ENCODE measurements at regions of chr9 and their contacts with region 1.

Region 1: DNA sequence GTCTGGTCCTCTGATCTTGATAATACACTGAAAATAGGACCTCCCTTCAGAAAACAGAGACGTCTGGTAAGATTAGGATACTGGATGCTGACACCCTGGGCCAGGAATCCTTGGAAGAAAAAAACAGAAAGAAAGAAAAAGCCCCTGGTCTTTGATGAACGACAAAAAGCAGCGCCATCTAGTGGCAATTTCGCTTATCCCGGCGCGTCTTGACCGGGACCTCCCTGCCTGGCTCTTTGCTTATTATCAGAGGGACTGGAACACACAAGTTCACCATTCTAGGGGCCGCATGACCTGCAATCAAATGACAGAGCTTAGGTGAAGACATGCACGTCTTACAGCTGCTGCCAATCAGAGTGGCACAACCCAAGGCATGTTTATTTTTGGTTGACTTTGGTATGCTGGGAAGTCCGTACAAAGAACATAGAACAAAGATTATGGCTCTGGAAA is 114.9 kb upstream of the NFIB start:
- DNase-seq: peak; percentile 69
- ATAC-seq: peak; percentile 62
- H3K4me3 ChIP-seq: no peak overlapping the region
- H3K27ac ChIP-seq: no peak overlapping the region
- H3K4me1 ChIP-seq: no peaks in the 10 kb centered on the region; the same call in 1 of the 2 replicates
- H3K27me3 ChIP-seq: peaks cover 25% of the 10 kb centered on the region
- CTCF ChIP-seq: peak; percentile 73
- POLR2A ChIP-seq: no peak
- RAD21 ChIP-seq: peak; percentile 63

Region 2: DNA sequence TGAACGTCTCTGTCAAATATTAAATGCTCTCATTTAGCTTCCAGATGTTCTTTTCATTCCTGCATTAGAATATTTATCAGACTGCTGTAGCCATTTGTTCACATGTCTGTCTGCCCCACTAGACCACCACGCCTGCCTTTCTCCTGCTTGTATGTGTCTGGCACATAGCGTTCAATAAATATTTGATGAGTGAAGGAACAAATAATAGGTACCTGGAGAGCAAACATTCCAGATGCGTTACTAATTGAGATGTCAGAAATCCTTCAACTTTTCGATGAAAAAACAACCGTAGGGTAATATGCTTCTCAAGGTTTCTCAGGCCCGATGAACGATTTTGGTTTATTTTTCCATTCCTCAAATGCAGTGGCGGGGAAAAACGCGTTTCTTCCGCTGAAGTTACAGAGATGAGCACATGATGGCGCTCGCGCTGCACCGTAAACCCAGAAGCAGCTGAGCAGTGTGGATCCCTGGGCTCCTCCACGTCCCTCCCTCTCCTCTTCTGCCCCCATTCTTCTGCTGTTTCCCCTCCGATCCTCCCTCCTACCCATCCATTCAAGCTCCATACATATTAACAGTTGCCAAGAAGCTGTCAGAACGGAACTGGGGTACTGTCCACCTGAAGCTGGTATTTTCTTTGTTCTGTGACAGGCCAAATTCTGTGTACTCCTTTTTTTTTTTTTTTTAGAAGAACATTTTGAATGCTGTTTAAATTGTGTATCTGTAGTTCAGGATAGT is 1394.7 kb before region 1 on chr9:
- CTCF ChIA-PET with region 1: no interaction called
- POLR2A ChIA-PET with region 1: no interaction called
- dilution Hi-C with region 1: no loop called
- in situ Hi-C with region 1: loop called (anchors 25 kb)
- intact Hi-C with region 1: loop called (anchors 1 kb)
- DNase-seq: peak; percentile 54
- ATAC-seq: peak; percentile 99
- H3K4me3 ChIP-seq: no peak overlapping the region
- H3K27ac ChIP-seq: no peak overlapping the region
- H3K4me1 ChIP-seq: no peaks in the 10 kb centered on the region
- H3K27me3 ChIP-seq: peaks cover 3% of the 10 kb centered on the region; the same call in 1 of the 2 replicates
- CTCF ChIP-seq: peak; percentile 87
- POLR2A ChIP-seq: no peak
- RAD21 ChIP-seq: peak; percentile 91

Region 3: DNA sequence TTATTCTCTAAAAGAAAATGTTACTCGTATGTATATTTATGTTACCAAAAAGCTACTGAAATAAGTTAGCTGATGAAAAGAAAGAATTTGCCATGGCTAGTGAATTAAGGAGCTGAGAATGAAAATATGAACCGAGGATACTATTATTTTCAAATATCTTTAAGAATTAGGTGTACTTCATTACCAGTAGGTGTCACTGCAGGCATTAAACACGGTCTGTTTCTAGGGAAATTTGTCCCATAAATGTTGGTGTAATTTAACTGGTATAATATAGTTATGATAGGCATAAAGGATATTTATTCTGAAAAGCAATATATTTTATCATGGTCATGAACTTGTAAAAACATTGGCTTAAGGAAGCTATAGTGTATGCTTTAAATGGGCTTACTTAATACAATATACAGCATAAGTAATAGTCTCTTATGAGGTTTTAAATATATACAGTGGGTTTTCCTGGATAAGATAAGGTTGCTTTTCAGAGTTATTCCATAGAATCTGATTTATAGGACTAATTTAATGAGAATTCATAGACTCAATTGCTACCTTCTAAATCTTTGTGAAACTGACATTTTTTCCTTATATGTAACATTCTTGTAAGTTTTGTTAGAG is 1076.9 kb before region 1 on chr9:
- CTCF ChIA-PET with region 1: no interaction called
- POLR2A ChIA-PET with region 1: no interaction called
- dilution Hi-C with region 1: no loop called
- in situ Hi-C with region 1: loop called (anchors 10 kb)
- intact Hi-C with region 1: loop called (anchors 5 kb)
- DNase-seq: peak; percentile 65
- ATAC-seq: peak; percentile 75
- H3K4me3 ChIP-seq: no peak overlapping the region
- H3K27ac ChIP-seq: no peak overlapping the region
- H3K4me1 ChIP-seq: peaks cover 2% of the 10 kb centered on the region; the same call in 1 of the 2 replicates
- H3K27me3 ChIP-seq: no peaks in the 10 kb centered on the region
- CTCF ChIP-seq: peak; percentile 73
- POLR2A ChIP-seq: no peak
- RAD21 ChIP-seq: peak; percentile 65

Region 4: DNA sequence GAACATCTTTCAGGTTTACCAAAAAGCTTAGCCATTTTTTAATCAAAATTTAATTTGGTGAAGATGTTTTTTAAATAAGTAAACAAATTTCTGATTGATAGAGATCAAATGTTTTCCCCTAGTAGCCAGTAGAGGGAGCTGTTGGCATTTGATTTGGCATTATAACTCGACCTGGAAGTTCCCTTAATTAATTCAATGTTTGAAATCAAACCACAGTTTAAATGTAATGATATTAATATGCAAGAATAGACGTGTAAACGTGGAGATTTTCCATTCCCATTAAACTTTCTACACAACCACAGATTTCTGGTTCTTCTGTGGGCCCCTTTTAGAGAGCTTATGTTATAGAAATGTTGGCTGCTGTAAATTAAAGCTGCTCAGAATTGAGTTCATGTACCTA is 1001.2 kb before region 1 on chr9:
- CTCF ChIA-PET with region 1: interaction called, 3 read pairs
- POLR2A ChIA-PET with region 1: no interaction called
- dilution Hi-C with region 1: loop called (anchors 25 kb)
- in situ Hi-C with region 1: no loop called
- intact Hi-C with region 1: loop called (anchors 1 kb)
- DNase-seq: peak; percentile 50
- ATAC-seq: peak; percentile 42; the same call in 1 of the 2 replicates
- H3K4me3 ChIP-seq: no peak overlapping the region
- H3K27ac ChIP-seq: no peak overlapping the region
- H3K4me1 ChIP-seq: no peaks in the 10 kb centered on the region
- H3K27me3 ChIP-seq: peaks cover 15% of the 10 kb centered on the region
- CTCF ChIP-seq: peak; percentile 71
- POLR2A ChIP-seq: no peak
- RAD21 ChIP-seq: peak; percentile 77

Region 5: GRCh38 chr9:14096258-14096922 is 332.4 kb before region 1 on chr9:
- CTCF ChIA-PET with region 1: no interaction called
- POLR2A ChIA-PET with region 1: no interaction called
- dilution Hi-C with region 1: no loop called
- in situ Hi-C with region 1: no loop called
- intact Hi-C with region 1: loop called (anchors 10 kb)
- DNase-seq: peak; percentile 62
- ATAC-seq: peak; percentile 21; the same call in 1 of the 2 replicates
- H3K4me3 ChIP-seq: no peak overlapping the region
- H3K27ac ChIP-seq: no peak overlapping the region
- H3K4me1 ChIP-seq: no peaks in the 10 kb centered on the region
- H3K27me3 ChIP-seq: peaks cover 5% of the 10 kb centered on the region
- CTCF ChIP-seq: no peak
- POLR2A ChIP-seq: no peak
- RAD21 ChIP-seq: no peak

Region 6: DNA sequence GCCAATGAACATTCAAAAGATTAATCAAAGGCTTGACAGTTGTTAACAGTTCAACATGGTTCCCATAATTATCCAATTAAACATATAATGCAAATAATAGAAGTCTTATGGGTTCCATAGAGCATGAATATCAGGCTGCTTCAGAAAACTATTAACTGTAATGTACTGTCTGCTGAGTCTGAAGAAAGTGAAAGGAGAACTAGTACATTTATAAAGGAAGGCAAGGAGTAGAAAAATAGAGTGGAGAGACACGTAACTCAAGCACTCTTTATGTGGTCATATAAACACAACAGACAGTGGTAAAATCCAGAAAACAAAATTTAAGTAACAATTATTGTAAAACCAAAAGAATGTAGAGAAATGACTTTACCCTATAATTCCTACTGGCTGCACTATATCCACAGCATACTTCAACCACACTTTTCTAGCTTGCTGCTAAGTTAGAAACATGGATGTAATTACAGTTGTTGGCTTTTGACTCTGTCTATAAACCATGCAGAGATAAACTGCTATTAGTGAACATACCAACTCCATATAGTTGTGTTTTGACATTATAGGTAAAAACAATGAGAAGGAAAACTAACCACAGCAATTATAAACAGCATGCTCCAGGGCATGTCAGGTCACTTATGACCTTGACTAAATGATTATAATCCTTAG is 147.5 kb before region 1 on chr9:
- CTCF ChIA-PET with region 1: no interaction called
- POLR2A ChIA-PET with region 1: no interaction called
- dilution Hi-C with region 1: no loop called
- in situ Hi-C with region 1: no loop called
- intact Hi-C with region 1: no loop called
- DNase-seq: no peak
- ATAC-seq: peak; percentile 18; the same call in 1 of the 2 replicates
- H3K4me3 ChIP-seq: no peak overlapping the region
- H3K27ac ChIP-seq: no peak overlapping the region
- H3K4me1 ChIP-seq: peaks cover 5% of the 10 kb centered on the region
- H3K27me3 ChIP-seq: peaks cover 3% of the 10 kb centered on the region
- CTCF ChIP-seq: no peak
- POLR2A ChIP-seq: no peak
- RAD21 ChIP-seq: no peak

Region 7: DNA sequence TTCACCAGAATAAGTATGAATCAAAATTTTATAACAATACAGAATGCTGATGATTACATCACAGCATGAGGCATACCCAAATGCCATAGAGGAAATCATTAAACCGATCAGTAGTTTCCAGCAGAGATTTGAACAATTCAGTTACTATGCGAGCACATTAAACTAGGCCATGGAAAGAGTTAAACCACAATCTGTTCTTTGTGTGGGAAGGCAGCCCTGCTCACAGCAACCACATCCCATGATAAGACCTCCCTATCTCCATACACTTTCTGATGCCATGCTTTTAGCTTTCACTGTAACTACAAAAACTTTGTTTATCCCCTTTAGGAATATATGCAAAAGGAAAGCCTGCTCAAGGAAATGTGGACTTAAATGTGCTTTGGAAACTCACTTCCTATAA is 119.4 kb before region 1 on chr9:
- CTCF ChIA-PET with region 1: no interaction called
- POLR2A ChIA-PET with region 1: no interaction called
- dilution Hi-C with region 1: no loop called
- in situ Hi-C with region 1: no loop called
- intact Hi-C with region 1: no loop called
- DNase-seq: peak; percentile 24
- ATAC-seq: no peak
- H3K4me3 ChIP-seq: no peak overlapping the region
- H3K27ac ChIP-seq: no peak overlapping the region
- H3K4me1 ChIP-seq: no peaks in the 10 kb centered on the region
- H3K27me3 ChIP-seq: peaks cover 46% of the 10 kb centered on the region
- CTCF ChIP-seq: no peak
- POLR2A ChIP-seq: no peak
- RAD21 ChIP-seq: no peak

Region 8: DNA sequence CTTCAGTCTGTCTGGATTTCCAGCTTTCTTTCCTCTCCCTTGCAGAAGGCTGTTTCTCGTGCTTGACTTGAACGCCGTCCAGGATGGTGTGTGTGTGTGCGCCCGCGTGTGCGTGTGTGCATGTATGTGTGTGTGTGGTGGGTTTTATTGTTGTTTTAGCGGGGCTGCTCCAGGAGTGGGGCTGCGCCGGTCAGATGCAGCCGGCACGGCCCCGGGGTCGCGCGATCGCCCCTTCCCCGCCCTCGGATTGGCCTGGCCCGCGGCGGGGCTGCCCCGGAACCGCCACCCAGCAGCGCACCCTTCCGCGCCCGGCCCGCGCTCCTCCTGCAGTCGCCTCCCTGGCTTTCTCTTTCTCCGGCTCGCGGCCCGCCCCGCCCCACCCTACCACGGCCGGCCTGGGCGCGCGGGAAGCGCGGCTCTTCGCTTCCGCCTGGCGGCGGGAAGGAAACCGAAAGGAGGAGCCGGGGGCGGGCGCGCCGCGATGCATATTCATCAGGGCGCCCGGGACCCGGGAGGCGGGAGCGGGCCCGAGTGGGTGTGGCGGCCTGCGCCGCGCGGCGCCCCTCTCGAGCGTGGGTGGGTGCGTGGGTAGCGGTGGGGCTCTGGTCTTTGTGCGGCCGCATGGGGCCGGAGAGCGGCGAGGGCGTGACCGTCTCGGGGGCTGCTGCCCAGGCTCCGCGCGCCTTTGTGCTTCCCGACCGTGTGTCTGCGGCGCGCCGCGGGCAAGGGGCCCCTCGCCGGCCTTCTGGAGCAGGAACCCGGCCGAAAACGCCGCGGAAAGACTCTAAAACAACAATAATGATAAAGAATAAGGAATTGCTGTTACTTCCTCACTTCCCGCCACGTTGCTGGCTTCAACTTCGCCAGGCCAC is 106.4 kb before region 1 on chr9:
- CTCF ChIA-PET with region 1: interaction called, 3 read pairs
- POLR2A ChIA-PET with region 1: no interaction called
- dilution Hi-C with region 1: no loop called
- in situ Hi-C with region 1: no loop called
- intact Hi-C with region 1: loop called (anchors 2 kb)
- DNase-seq: peak; percentile 76
- ATAC-seq: peak; percentile 93
- H3K4me3 ChIP-seq: peak overlapping the region; percentile 59
- H3K27ac ChIP-seq: peak overlapping the region; percentile 43; the same call in 1 of the 2 replicates
- H3K4me1 ChIP-seq: peaks cover 4% of the 10 kb centered on the region
- H3K27me3 ChIP-seq: peaks cover 40% of the 10 kb centered on the region
- CTCF ChIP-seq: peak; percentile 51
- POLR2A ChIP-seq: no peak
- RAD21 ChIP-seq: peak; percentile 60

Region 9: DNA sequence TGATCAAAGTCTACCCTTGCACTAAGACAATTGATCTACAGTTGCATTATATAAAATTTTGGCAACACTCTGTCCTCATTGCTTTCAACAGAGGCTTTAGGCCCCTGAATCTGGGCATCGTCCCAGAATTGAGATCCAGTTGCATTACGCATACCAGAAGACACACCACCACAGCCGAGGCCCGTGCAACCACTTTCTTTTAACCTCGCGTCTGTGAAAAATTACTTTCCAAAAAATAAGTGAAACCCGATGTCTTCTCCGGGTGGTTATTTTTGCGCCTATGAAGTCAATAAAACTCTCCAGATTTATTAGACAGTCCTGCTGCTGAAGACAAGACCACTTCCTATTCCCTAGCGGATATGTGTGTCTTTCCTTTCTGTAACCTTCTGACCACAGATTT is 62.7 kb before region 1 on chr9:
- CTCF ChIA-PET with region 1: interaction called, 3 read pairs
- POLR2A ChIA-PET with region 1: no interaction called
- dilution Hi-C with region 1: no loop called
- in situ Hi-C with region 1: loop called (anchors 5 kb)
- intact Hi-C with region 1: loop called (anchors 5 kb)
- DNase-seq: peak; percentile 93
- ATAC-seq: peak; percentile 92
- H3K4me3 ChIP-seq: no peak overlapping the region
- H3K27ac ChIP-seq: no peak overlapping the region
- H3K4me1 ChIP-seq: peaks cover 3% of the 10 kb centered on the region; the same call in 1 of the 2 replicates
- H3K27me3 ChIP-seq: peaks cover 7% of the 10 kb centered on the region
- CTCF ChIP-seq: no peak
- POLR2A ChIP-seq: no peak
- RAD21 ChIP-seq: no peak

Region 10: DNA sequence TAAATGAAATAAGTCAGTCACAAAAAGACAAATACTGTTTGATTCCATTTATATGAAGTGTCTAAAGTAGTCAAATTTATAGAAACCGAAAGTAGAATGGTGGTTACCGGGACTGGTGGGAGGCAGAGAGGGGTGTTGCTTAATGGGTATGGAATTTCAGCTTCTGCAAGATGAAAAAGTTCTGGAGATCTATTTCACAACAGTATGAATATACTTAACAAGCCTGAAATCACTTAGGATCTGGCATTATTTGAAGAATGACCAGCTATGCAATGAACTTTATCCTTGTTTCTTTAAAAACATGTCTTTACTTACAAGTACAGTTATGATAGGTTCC is 496.1 kb after region 1 on chr9:
- CTCF ChIA-PET with region 1: no interaction called
- POLR2A ChIA-PET with region 1: no interaction called
- dilution Hi-C with region 1: no loop called
- in situ Hi-C with region 1: no loop called
- intact Hi-C with region 1: no loop called
- DNase-seq: peak; percentile 28
- ATAC-seq: no peak
- H3K4me3 ChIP-seq: no peak overlapping the region
- H3K27ac ChIP-seq: no peak overlapping the region
- H3K4me1 ChIP-seq: no peaks in the 10 kb centered on the region
- H3K27me3 ChIP-seq: no peaks in the 10 kb centered on the region
- CTCF ChIP-seq: no peak
- POLR2A ChIP-seq: no peak
- RAD21 ChIP-seq: no peak